ENCODE measurements at regions of chr20 and their contacts with region 1.

Region 1: GRCh38 chr20:2206957-2207769 is 88.6 kb upstream of the TGM3 start:
- DNase-seq: peak; percentile 83
- ATAC-seq: peak; percentile 81
- H3K4me3 ChIP-seq: peak overlapping the region; percentile 16 to 73 (median 70)
- H3K4me3 Mint-ChIP-seq: peak overlapping the region; percentile 90
- H3K27ac ChIP-seq: peak overlapping the region in 1 of 2 donors; percentile 37
- H3K27ac Mint-ChIP-seq: peak overlapping the region; percentile 67
- H3K4me1 ChIP-seq: peaks cover 4 to 16% of the 10 kb centered on the region in 2 donors
- H3K4me1 Mint-ChIP-seq: peaks cover 22% of the 10 kb centered on the region
- H3K27me3 ChIP-seq: peaks cover 0 to 5% (median 0%) of the 10 kb centered on the region in 4 experiments
- H3K27me3 Mint-ChIP-seq: no peaks in the 10 kb centered on the region
- CTCF ChIP-seq: peak; percentile 86

Region 2: DNA sequence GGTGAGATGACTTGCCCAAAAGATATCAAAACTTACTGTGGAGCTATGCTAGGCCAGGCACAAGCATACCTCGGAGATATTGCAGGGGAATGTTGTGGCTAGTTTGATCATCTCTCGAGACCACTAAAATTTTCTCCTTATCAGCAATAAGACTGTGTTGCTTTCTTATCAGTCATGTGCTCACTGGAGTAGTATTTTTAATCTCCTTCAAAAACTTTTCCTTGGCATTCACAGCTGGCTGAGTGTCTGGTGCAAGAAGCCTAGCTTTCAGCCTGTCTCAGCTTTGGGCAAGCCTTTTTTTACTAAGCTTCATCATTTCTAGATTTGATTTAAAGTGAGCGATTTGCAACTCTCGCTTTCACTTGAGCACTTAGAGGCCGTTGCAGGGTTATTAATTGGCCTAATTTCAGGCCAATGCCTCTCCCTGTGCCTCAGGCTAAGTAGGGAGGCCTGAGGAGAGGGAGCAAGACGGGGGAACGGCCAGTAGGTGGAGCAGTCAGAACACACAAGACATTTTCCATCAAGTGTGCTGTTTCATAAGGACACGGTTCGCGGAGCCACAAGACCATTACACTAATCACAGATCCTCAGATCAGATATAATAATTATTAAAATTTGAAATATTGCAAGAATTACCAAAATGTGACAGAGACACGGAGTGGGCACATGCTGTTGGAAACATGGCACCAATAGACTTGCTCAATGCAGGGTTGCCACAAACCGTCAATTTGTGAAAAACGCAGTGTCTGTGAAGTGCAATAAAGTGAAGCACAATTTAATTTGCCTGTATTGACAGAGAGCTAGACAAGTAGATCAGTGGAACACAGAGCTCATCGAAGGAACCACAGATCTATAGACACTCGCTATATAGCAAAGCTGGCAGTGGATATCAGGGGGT is 442.8 kb before region 1 on chr20:
- CTCF ChIA-PET with region 1: interaction called, 24 read pairs
- POLR2A ChIA-PET with region 1: no interaction called
- intact Hi-C with region 1: no loop called
- DNase-seq: peak; percentile 77
- ATAC-seq: peak; percentile 79
- H3K4me3 ChIP-seq: no peak overlapping the region
- H3K4me3 Mint-ChIP-seq: no peak overlapping the region
- H3K27ac ChIP-seq: no peak overlapping the region
- H3K27ac Mint-ChIP-seq: no peak overlapping the region
- H3K4me1 ChIP-seq: no peaks in the 10 kb centered on the region
- H3K4me1 Mint-ChIP-seq: peaks cover 1% of the 10 kb centered on the region
- H3K27me3 ChIP-seq: peaks cover 0 to 3% (median 0%) of the 10 kb centered on the region in 4 experiments
- H3K27me3 Mint-ChIP-seq: peaks cover 13% of the 10 kb centered on the region
- CTCF ChIP-seq: peak; percentile 87

Region 3: DNA sequence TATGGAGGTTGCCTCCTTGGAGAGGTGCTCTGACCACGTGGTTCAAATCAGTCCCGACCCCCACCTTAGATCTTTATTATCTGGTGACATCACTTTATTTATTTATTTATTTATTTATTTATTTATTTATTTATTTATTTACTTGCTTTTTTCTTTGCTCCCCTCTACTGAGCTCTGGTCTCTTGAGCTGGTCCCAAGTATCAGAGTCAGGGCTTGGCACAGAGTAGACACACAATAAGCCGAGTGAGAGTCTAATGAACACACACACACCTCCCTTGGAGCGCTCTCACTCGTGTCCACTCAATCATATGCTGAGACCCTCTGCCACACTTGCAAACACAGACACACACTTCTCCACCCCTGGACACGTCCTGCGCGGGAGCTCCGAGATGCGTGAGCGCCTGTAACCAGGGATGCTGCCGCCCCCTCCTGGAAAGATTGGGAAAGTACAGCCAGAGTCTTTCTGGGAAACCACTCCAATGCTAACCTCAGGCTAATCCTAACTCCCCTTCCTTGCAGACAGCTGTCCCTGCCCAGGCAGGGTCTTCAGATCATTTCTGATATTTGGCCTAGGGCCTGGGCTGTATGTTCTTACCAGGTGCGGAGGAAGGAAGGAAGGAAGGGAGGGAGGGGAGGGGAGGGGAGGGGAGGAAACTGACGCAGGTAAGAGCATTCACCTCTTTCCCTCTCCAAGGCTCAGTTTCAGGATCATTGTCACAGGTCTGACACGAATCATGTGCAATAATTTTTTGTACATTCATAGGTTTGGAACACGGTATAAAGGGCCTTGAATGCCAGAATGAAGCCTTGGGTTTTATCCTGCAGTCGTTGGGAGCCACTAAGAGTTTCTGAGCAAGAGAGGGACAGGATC is 34.6 kb before region 1 on chr20:
- CTCF ChIA-PET with region 1: interaction called, 11 read pairs
- POLR2A ChIA-PET with region 1: no interaction called
- intact Hi-C with region 1: no loop called
- DNase-seq: peak; percentile 76
- ATAC-seq: peak; percentile 69
- H3K4me3 ChIP-seq: no peak overlapping the region
- H3K4me3 Mint-ChIP-seq: peak overlapping the region; percentile 18
- H3K27ac ChIP-seq: no peak overlapping the region
- H3K27ac Mint-ChIP-seq: no peak overlapping the region
- H3K4me1 ChIP-seq: peaks cover 0 to 3% of the 10 kb centered on the region in 2 donors
- H3K4me1 Mint-ChIP-seq: peaks cover 3% of the 10 kb centered on the region
- H3K27me3 ChIP-seq: peaks cover 0 to 6% (median 1%) of the 10 kb centered on the region in 4 experiments
- H3K27me3 Mint-ChIP-seq: peaks cover 32% of the 10 kb centered on the region
- CTCF ChIP-seq: peak; percentile 88

Region 4: GRCh38 chr20:2349818-2350508 is 142.8 kb after region 1 on chr20:
- CTCF ChIA-PET with region 1: interaction called, 10 read pairs
- POLR2A ChIA-PET with region 1: no interaction called
- intact Hi-C with region 1: loop called (anchors 1 kb)
- DNase-seq: no peak
- ATAC-seq: no peak
- H3K4me3 ChIP-seq: no peak overlapping the region
- H3K4me3 Mint-ChIP-seq: no peak overlapping the region
- H3K27ac ChIP-seq: no peak overlapping the region
- H3K27ac Mint-ChIP-seq: no peak overlapping the region
- H3K4me1 ChIP-seq: peaks cover 5 to 7% of the 10 kb centered on the region in 2 donors
- H3K4me1 Mint-ChIP-seq: peaks cover 6% of the 10 kb centered on the region
- H3K27me3 ChIP-seq: peaks cover 0 to 20% (median 4%) of the 10 kb centered on the region in 4 experiments
- H3K27me3 Mint-ChIP-seq: peaks cover 26% of the 10 kb centered on the region
- CTCF ChIP-seq: no peak

Region 5: DNA sequence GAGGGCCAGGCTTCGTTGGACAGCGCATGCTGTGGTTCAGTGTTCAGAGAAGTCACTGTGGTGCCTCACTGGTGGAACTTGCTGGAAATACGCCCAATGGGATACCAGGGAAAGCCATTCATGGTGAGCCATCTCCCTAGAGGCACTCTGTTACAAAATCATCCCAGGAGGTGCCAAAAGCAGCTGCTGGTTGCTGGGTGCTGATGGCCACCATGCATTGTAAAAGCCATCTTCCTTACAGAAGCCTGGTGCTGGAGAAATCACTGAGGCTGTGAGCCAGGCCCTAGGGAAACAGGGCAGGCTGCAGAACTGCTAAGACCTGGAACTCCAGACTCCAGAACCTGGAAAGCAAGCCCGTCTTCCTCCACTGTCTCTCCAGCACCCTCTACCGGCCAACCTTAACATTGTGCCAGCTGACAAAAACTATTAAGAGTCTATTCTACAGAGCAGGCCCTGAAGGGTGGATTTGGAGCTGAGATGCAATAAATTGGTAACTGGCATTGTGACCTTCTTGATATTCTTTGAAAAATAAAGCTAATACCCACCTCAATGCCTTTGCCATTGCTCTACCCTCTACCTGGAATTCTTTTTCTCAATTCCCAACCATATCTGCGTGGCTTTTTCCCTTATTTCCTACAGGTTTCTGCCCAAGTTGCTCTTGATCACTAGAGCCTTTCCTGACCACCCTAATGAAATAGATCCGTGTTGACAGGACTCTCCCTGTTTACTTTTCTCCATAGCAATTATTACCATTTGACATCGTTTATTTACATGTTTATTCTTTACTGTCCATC is 245.0 kb after region 1 on chr20:
- CTCF ChIA-PET with region 1: interaction called, 104 read pairs
- POLR2A ChIA-PET with region 1: interaction called, 3 read pairs
- intact Hi-C with region 1: loop called (anchors 1 kb)
- DNase-seq: peak; percentile 63
- ATAC-seq: peak; percentile 53
- H3K4me3 ChIP-seq: no peak overlapping the region
- H3K4me3 Mint-ChIP-seq: no peak overlapping the region
- H3K27ac ChIP-seq: no peak overlapping the region
- H3K27ac Mint-ChIP-seq: no peak overlapping the region
- H3K4me1 ChIP-seq: no peaks in the 10 kb centered on the region
- H3K4me1 Mint-ChIP-seq: no peaks in the 10 kb centered on the region
- H3K27me3 ChIP-seq: no peaks in the 10 kb centered on the region
- H3K27me3 Mint-ChIP-seq: no peaks in the 10 kb centered on the region
- CTCF ChIP-seq: peak; percentile 83

Region 6: GRCh38 chr20:2752567-2753460 is 545.7 kb after region 1 on chr20:
- CTCF ChIA-PET with region 1: interaction called, 3 read pairs
- POLR2A ChIA-PET with region 1: no interaction called
- intact Hi-C with region 1: loop called (anchors 5 kb)
- DNase-seq: peak; percentile 53
- ATAC-seq: peak; percentile 9
- H3K4me3 ChIP-seq: peak overlapping the region in 4 of 5 experiments; percentile 36 to 66 (median 52)
- H3K4me3 Mint-ChIP-seq: peak overlapping the region; percentile 84
- H3K27ac ChIP-seq: no peak overlapping the region
- H3K27ac Mint-ChIP-seq: no peak overlapping the region
- H3K4me1 ChIP-seq: peaks cover 29 to 32% of the 10 kb centered on the region in 2 donors
- H3K4me1 Mint-ChIP-seq: peaks cover 29% of the 10 kb centered on the region
- H3K27me3 ChIP-seq: peaks cover 0 to 82% (median 45%) of the 10 kb centered on the region in 4 experiments
- H3K27me3 Mint-ChIP-seq: peaks cover 61% of the 10 kb centered on the region
- CTCF ChIP-seq: peak; percentile 61